BJ (cell line): ENCODE measurements at regions of chr2 and their contacts with region 1.

Region 1: GRCh38 chr2:48946449-48947048 is 191.0 kb upstream of the LHCGR start:
- DNase-seq: no peak
- H3K4me3 ChIP-seq: no peak overlapping the region
- H3K27me3 ChIP-seq: 0 out of 2 replicates have a peak, but pooled peaks cover 2% of the 10 kb centered on the region
- CTCF ChIP-seq: peak; percentile 79

Region 2: DNA sequence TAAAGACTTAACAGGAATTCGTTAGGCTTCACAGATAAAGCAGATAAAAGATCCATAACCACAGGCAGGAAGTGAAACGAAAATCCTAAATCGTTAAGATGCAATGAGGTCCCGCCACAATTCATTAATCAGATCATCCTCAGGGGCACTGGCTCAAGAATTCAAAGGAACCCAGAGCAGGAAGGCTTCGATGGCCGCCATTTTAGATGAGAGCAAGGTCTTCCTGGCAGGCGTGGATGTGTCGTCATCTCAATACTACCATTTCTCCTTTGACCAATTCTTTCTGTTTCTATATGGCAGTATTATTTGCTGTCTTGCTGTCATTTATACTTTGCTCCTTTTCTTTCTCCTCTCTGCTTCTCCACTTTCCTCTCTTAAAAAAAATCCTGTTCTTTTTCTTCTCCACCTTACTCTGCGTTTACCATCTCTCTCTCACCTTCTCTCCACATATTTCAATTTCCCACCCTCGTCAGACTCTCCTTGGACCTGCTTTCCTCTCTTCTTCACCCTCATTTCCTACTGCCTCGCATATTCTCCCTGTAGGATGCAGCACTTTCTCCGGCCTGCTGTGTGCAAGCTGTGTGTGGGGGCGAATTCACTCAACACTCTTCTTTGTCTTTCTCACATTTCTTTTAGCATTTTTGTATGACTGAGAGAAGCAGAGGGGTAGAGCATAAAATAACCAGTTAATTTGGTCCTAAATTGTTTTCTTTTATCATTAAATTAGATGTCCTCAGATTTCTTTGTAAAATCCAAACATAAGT is 156.0 kb before region 1 on chr2:
- CTCF ChIA-PET with region 1: no interaction called
- POLR2A ChIA-PET with region 1: no interaction called
- DNase-seq: no peak
- H3K4me3 ChIP-seq: no peak overlapping the region
- H3K27me3 ChIP-seq: no peaks in the 10 kb centered on the region
- CTCF ChIP-seq: no peak

Region 3: DNA sequence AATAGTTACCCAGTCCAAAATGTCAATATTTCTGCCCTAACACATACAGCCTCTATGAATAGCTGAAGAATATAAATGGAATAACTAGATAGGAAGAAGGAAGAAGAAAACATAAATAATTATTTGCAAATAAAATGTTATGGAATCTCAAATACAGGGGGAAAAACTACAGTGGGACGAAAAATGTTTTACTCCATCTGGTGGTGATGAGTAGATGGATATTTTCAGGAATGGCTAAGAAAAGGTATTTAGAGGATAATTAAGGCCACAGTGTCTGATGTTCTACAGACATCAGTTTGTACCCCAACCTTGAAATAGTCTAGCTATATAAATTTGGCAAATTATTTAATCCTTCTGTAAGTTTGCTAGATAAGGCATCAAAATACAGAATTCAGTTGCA is 385.9 kb after region 1 on chr2:
- CTCF ChIA-PET with region 1: interaction called, 12 read pairs
- POLR2A ChIA-PET with region 1: no interaction called
- DNase-seq: no peak
- H3K4me3 ChIP-seq: no peak overlapping the region
- H3K27me3 ChIP-seq: no peaks in the 10 kb centered on the region
- CTCF ChIP-seq: no peak

Region 4: GRCh38 chr2:50143822-50144575 is 1197.5 kb after region 1 on chr2:
- CTCF ChIA-PET with region 1: interaction called, 11 read pairs
- POLR2A ChIA-PET with region 1: no interaction called
- DNase-seq: peak; percentile 5
- H3K4me3 ChIP-seq: peak overlapping the region; percentile 33
- H3K27me3 ChIP-seq: no peaks in the 10 kb centered on the region
- CTCF ChIP-seq: peak; percentile 68

Region 5: DNA sequence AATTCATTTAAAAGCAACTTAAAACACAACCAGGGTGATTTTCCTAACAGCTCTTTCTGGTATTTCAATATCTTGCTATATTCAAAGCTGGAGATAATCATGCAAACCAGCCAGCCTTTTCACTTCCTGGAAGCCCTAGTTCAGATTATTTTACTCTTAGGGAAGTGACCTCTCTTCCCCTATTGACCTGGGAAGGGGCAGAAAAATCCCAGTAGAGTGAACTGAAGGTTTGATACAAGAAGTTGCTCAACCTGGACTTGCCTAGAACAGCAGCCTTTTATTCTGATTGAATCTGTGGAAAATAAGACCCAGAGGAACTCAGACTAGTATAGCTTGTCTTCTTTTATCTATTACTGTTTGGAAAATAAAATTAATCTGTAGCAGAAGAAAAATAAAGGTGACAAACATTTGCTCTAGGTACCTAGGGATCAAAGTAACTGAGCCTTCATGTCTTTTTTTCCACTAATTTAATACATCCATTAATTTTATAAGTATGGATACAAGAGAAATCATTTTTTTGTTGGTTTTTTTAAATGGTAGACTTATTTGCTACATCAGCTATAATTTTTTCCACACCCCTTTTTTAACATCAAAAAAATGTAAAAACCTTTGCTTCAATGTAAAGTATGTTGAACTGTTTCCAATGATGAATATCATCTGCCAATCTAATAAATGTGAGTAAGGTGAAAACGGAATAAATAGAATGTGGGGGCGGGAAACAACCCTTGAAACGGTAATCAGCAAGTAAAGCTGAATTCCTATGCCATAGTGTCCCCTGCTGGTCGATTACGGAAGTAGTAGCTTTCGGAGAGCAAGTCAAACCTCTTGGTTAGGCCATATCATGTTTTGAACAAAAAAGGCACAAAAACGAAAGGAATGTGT is 1455.5 kb after region 1 on chr2:
- CTCF ChIA-PET with region 1: interaction called, 15 read pairs
- POLR2A ChIA-PET with region 1: no interaction called
- DNase-seq: no peak
- H3K4me3 ChIP-seq: no peak overlapping the region
- H3K27me3 ChIP-seq: no peaks in the 10 kb centered on the region
- CTCF ChIP-seq: peak; percentile 79